Mammary epithelial cell (primary cell): ENCODE measurements at regions of chr2 and their contacts with region 1.

Region 1: GRCh38 chr2:142339261-142339660 is 208.4 kb upstream of the LRP1B start:
- DNase-seq: no peak
- H3K4me3 ChIP-seq: no peak overlapping the region
- H3K27ac ChIP-seq: no peak overlapping the region
- H3K4me1 ChIP-seq: no peaks in the 10 kb centered on the region
- H3K27me3 ChIP-seq: no peaks in the 10 kb centered on the region
- CTCF ChIP-seq: no peak

Region 2: GRCh38 chr2:142200062-142200461 is 139.2 kb before region 1 on chr2:
- CTCF ChIA-PET with region 1: no interaction called
- dilution Hi-C with region 1: no loop called
- in situ Hi-C with region 1: no loop called
- intact Hi-C with region 1: no loop called
- DNase-seq: no peak
- H3K4me3 ChIP-seq: no peak overlapping the region
- H3K27ac ChIP-seq: no peak overlapping the region
- H3K4me1 ChIP-seq: no peaks in the 10 kb centered on the region
- H3K27me3 ChIP-seq: no peaks in the 10 kb centered on the region
- CTCF ChIP-seq: no peak

Region 3: DNA sequence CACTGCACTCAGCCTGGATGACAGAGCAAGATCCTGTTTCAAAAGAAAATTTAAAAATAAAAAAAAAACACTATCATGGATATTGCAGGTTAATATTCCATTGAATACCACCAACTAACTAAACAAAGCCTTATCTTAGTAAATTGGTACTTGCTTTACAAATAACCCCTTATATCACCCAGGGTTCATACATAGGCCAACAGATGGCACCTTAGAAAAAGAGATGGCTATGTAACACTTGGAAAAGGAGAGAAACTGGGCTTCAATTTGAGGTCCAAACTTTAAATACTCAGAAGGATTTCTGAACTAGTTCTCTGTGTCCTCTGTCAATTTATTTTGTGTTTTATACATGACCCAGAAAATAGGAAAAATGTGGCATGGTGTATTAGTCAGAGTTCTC is 41.1 kb after region 1 on chr2:
- CTCF ChIA-PET with region 1: no interaction called
- dilution Hi-C with region 1: no loop called
- in situ Hi-C with region 1: no loop called
- intact Hi-C with region 1: no loop called
- DNase-seq: no peak
- H3K4me3 ChIP-seq: no peak overlapping the region
- H3K27ac ChIP-seq: no peak overlapping the region
- H3K4me1 ChIP-seq: no peaks in the 10 kb centered on the region
- H3K27me3 ChIP-seq: no peaks in the 10 kb centered on the region
- CTCF ChIP-seq: no peak

Region 4: GRCh38 chr2:143051465-143051864 is 712.2 kb after region 1 on chr2:
- CTCF ChIA-PET with region 1: interaction called, 19 read pairs
- dilution Hi-C with region 1: no loop called
- in situ Hi-C with region 1: no loop called
- intact Hi-C with region 1: no loop called
- DNase-seq: peak; percentile 19
- H3K4me3 ChIP-seq: no peak overlapping the region
- H3K27ac ChIP-seq: no peak overlapping the region
- H3K4me1 ChIP-seq: no peaks in the 10 kb centered on the region
- H3K27me3 ChIP-seq: no peaks in the 10 kb centered on the region
- CTCF ChIP-seq: no peak